Activated CD4-positive, alpha-beta T cell treated with anti-CD3 and anti-CD28 coated beads, Interleukin-2, amount 10 ng/mL, durations not matched to agents 24 days and 14 days (primary cell): ENCODE measurements at regions of chr20 and their contacts with region 1.

Region 1: GRCh38 chr20:63980806-63981728 is at the start of gene PRPF6:
- DNase-seq: peak; percentile 99
- H3K4me3 Mint-ChIP-seq: peak within 1 kb of the TSS; percentile 99
- H3K27ac Mint-ChIP-seq: peak within 1 kb of the TSS; percentile 100
- H3K4me1 Mint-ChIP-seq: peaks cover 58% of the 10 kb centered on the region
- H3K27me3 Mint-ChIP-seq: no peaks in the 10 kb centered on the region
- total RNA-seq, gene PRPF6: 79.5 and 81.3 TPM in 2 replicates

Region 2: GRCh38 chr20:63864847-63865640 is 116.0 kb before region 1 on chr20 and contains the start of gene TPD52L2:
- intact Hi-C with region 1: loop called (anchors 2 kb)
- DNase-seq: peak; percentile 99
- H3K4me3 Mint-ChIP-seq: peak within 1 kb of the TSS; percentile 87
- H3K27ac Mint-ChIP-seq: peak within 1 kb of the TSS; percentile 100
- H3K4me1 Mint-ChIP-seq: peaks cover 25% of the 10 kb centered on the region
- H3K27me3 Mint-ChIP-seq: no peaks in the 10 kb centered on the region
- total RNA-seq, gene TPD52L2: 75.9 and 78.8 TPM in 2 replicates

Region 3: GRCh38 chr20:63955827-63956663 is 25.0 kb before region 1 on chr20 and contains the start of gene UCKL1:
- intact Hi-C with region 1: loop called (anchors 1 kb)
- DNase-seq: peak; percentile 97
- H3K4me3 Mint-ChIP-seq: peak within 1 kb of the TSS; percentile 85
- H3K27ac Mint-ChIP-seq: peak within 1 kb of the TSS; percentile 88
- H3K4me1 Mint-ChIP-seq: peaks cover 28% of the 10 kb centered on the region
- H3K27me3 Mint-ChIP-seq: no peaks in the 10 kb centered on the region
- total RNA-seq, gene UCKL1: 48.1 and 49.5 TPM in 2 replicates

Region 4: DNA sequence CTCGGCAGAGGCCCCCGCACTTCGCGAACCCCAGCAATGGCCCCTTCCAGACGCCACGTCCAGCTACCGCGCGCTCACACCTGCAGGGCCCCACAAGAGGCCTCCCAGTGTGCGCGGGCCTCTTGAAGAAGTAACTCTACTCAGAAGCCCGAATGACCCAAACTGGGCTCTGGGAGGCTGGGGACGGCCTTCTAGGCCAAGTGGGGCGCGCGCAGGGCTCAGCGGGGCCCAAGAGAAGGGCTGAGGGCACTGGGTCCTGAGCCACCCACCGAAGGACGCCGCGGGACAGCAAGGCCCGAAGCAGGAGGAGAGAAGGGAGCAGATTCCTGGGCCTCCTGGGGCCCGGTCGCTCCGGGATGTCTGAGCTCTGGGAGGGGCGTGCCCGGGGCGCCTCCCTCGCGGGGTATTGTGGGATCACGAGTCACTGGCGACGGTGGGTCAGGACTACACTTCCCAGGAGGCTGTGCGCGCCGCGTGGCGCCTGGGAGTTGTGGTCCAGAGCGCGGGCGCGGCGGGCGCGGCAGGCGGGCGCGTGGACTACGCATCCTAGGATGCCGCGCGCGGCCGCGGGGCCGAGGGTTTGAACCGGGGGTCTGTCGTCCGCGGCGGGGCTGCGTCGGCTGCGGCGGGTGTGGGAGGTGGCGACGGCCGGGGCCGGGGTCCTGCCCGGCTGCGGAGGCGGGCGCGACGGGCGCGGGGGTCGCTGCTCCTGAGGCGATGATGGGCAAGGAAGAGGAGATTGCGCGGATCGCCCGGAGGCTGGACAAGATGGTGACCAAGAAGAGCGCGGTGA is 81.7 kb after region 1 on chr20 and contains the start of gene TCEA2:
- intact Hi-C with region 1: loop called (anchors 1 kb)
- DNase-seq: peak; percentile 99
- H3K4me3 Mint-ChIP-seq: peak within 1 kb of the TSS; percentile 95
- H3K27ac Mint-ChIP-seq: peak within 1 kb of the TSS; percentile 91
- H3K4me1 Mint-ChIP-seq: peaks cover 54% of the 10 kb centered on the region
- H3K27me3 Mint-ChIP-seq: no peaks in the 10 kb centered on the region
- total RNA-seq, gene TCEA2: 35.4 and 36.8 TPM in 2 replicates